K562 (cell line): ENCODE measurements at regions of chr1 and their contacts with region 1.

Region 1: DNA sequence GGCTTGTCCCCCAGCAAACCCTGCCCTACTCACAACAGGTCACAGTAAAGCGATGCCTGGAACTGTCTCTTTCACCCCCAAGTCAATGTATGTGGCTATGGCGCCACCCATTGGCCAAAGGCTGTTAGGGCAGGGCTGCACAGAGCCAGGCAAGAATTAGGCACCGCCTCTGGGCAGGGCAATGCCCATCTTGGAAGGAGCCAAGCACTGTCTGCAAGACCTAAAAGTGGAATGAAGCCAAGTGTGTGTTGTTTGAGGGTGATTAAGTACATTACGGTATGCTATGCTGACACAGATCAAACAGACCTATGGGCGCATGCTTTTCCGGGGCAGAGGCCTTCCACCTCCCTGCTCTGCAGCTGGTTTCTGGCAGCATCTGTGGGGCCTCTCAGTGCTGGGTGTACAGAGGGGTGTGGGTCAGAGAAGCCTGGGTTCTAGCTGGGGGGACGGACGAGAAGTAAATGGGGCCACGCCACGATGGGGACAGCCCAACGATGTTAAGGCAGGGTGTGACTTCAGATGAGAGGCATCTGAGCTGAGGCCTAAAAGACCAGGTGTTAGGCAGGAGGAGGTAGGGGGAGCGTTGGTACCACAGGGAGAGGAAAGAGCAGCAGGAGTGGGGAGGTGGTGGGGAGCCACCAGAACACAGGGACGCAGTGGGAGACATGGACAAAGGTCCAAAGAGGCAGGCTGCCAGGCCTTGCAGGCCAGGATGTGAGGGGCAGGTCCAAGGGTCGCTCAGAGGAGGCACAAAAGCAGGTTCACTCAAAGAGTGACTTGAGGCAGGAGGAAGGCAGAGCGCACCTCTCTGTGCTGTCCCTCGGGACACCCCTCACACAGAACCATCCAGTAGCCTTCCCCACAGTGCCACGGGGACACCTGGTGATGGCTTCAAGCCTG is 49.8 kb downstream of the ACOT7 start:
- DNase-seq: peak; percentile 77 to 83 (median 80)
- ATAC-seq: peak; percentile 94
- H3K4me3 ChIP-seq: no peak overlapping the region
- H3K27ac ChIP-seq: no peak overlapping the region
- H3K4me1 ChIP-seq: no peaks in the 10 kb centered on the region
- H3K27me3 ChIP-seq: no peaks in the 10 kb centered on the region
- CTCF ChIP-seq: peak; percentile 95 to 99 (median 98)
- EP300 ChIP-seq: no peak
- POLR2A ChIP-seq: no peak
- RAD21 ChIP-seq: peak; percentile 98

Region 2: GRCh38 chr1:6041432-6042062 is 302.2 kb before region 1 on chr1:
- CTCF ChIA-PET with region 1: no interaction called
- POLR2A ChIA-PET with region 1: no interaction called
- in situ Hi-C with region 1: loop called (anchors 5 kb)
- intact Hi-C with region 1: no loop called
- DNase-seq: peak; percentile 70 to 83 (median 81)
- ATAC-seq: peak; percentile 94
- H3K4me3 ChIP-seq: no peak overlapping the region
- H3K27ac ChIP-seq: no peak overlapping the region
- H3K4me1 ChIP-seq: peaks cover 0 to 20% of the 10 kb centered on the region in 2 experiments; a peak in 2 of 5 replicates
- H3K27me3 ChIP-seq: peaks cover 0 to 19% of the 10 kb centered on the region in 2 experiments; a peak in 4 of 5 replicates
- CTCF ChIP-seq: peak; percentile 85 to 89 (median 88)
- EP300 ChIP-seq: no peak
- POLR2A ChIP-seq: no peak
- RAD21 ChIP-seq: peak in 1 of 2 experiments; percentile 84; a peak in 3 of 4 replicates

Region 3: DNA sequence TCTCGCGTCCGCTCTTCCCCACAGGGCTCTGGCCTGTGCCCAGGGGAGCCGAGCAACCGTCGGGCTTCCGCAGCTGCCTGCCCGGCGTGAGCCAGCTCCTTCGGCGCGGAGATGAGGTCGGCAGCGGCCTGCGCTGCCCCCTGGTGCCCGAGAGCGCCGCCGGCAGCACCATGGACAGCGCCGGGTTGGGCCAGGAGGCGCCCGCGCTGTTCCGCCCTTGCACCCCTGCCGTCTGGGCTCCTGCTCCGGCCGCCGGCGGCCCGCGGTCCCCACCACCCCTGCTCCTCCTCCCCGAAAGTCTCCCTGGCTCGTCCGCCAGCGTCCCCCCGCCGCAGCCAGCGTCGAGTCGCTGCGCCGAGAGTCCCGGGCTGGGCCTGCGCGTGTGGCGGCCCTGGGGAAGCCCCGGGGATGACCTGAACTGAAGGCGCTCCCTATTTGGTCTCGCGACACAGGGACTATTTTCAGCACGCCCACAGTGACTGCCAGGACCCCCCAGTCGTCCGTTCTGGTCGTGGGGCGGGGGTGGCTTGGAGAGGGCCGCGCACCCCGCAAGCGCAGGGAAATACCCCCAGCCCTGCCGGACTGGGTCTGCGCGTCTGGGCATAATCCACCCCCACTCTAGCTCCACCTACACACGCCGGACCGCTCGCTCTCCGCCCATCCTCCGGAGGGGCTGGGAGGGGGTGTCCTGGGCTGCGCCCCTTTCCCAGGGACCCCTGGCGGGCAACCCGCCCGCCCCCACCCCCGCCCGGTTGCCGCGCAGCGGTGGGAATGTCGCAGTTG is 98.5 kb before region 1 on chr1:
- CTCF ChIA-PET with region 1: interaction called, 131 read pairs
- POLR2A ChIA-PET with region 1: no interaction called
- in situ Hi-C with region 1: loop called (anchors 5 kb)
- intact Hi-C with region 1: loop called (anchors 1 kb)
- DNase-seq: peak; percentile 90 to 92 (median 90)
- ATAC-seq: peak; percentile 89
- H3K4me3 ChIP-seq: peak overlapping the region; percentile 34
- H3K27ac ChIP-seq: no peak overlapping the region
- H3K4me1 ChIP-seq: peaks cover 5 to 64% of the 10 kb centered on the region in 2 experiments; a peak in 3 of 5 replicates
- H3K27me3 ChIP-seq: peaks cover 40 to 70% of the 10 kb centered on the region in 2 experiments
- CTCF ChIP-seq: peak; percentile 90 to 98 (median 96)
- EP300 ChIP-seq: no peak
- POLR2A ChIP-seq: no peak
- RAD21 ChIP-seq: peak; percentile 87 to 95

Region 4: DNA sequence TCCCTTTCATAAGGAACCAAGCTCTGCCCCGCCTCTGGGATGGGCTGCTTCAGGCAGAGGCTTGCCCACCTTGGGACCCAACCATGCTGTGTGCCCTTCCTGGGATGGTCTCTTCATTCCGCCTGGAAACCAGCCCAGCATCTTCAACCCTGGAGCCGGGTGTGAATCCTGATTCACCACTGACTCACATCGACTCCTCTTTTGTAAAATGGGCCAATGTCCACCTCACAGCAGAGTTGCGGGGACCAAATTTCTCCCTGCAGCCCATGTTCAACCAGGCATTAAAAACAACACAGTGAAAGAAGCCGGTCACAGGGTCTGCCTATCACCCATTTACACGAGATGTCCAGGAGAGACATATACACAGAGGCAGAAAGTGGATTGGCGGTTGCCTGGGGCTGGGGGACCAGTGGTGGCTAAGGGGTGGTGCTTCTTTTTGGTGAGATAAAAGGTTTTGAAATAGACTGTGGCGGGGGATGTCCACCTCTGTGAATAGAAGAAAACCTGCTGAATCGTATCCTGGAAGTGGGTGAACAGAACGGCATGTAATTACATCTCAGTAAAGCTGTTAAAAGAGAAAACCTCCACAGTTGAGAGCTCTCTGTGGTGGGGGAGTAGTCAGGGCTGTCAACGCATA is 76.0 kb before region 1 on chr1:
- CTCF ChIA-PET with region 1: interaction called, 20 read pairs
- POLR2A ChIA-PET with region 1: interaction called, 3 read pairs
- in situ Hi-C with region 1: no loop called
- intact Hi-C with region 1: loop called (anchors 1 kb)
- DNase-seq: no peak
- ATAC-seq: peak; percentile 37
- H3K4me3 ChIP-seq: no peak overlapping the region
- H3K27ac ChIP-seq: no peak overlapping the region
- H3K4me1 ChIP-seq: peaks cover 0 to 70% of the 10 kb centered on the region in 2 experiments; a peak in 3 of 5 replicates
- H3K27me3 ChIP-seq: no peaks in the 10 kb centered on the region
- CTCF ChIP-seq: no peak
- EP300 ChIP-seq: no peak
- POLR2A ChIP-seq: no peak
- RAD21 ChIP-seq: no peak

Region 5: GRCh38 chr1:6401673-6402072 is 57.9 kb after region 1 on chr1:
- CTCF ChIA-PET with region 1: interaction called, 74 read pairs
- POLR2A ChIA-PET with region 1: no interaction called
- in situ Hi-C with region 1: loop called (anchors 5 kb)
- intact Hi-C with region 1: loop called (anchors 1 kb)
- DNase-seq: no peak
- ATAC-seq: no peak
- H3K4me3 ChIP-seq: no peak overlapping the region
- H3K27ac ChIP-seq: no peak overlapping the region
- H3K4me1 ChIP-seq: peaks cover 0 to 12% of the 10 kb centered on the region in 2 experiments; a peak in 3 of 5 replicates
- H3K27me3 ChIP-seq: peaks cover 6% of the 10 kb centered on the region in 2 experiments
- CTCF ChIP-seq: no peak
- EP300 ChIP-seq: no peak
- POLR2A ChIP-seq: no peak
- RAD21 ChIP-seq: no peak

Region 6: DNA sequence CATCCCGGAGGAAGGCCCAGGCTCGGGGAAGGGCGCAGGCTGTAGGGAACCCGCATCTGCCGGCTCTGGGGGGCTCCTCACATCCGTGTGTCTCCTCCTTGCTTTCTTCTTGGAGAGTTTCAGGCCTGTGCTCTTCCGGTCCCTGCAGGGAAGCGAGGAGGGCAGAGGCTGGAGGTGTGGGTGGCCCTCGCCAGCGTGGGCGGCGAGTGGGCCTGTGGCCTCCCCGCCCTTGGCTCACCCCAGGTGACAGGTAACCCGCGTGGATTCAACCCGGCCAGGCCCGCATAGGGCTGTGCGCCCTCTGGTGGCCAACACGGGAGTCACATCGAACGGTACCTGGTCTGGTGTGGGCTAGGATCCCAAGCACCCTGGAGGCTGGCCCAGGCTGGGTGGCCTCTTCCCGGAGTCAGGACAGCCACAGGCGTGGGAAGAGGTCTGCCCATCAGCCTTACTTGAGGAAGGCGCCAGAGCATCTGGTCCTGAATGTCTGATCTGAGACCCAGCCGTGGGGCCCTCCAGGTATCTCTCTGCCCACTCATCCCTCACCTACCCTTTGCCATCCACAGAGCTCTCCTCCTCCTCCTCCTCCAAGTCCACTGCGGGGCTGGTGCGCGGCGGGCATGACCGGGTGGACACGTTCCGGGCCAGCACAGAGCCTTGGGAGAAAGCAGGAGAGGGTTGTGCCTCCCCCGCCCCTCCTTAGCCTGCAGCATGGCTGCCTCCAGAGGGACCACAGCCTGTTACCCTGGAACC is 131.8 kb after region 1 on chr1:
- CTCF ChIA-PET with region 1: interaction called, 6 read pairs
- POLR2A ChIA-PET with region 1: no interaction called
- in situ Hi-C with region 1: no loop called
- intact Hi-C with region 1: loop called (anchors 1 kb)
- DNase-seq: peak; percentile 82 to 96 (median 94)
- ATAC-seq: peak; percentile 80
- H3K4me3 ChIP-seq: no peak overlapping the region
- H3K27ac ChIP-seq: no peak overlapping the region
- H3K4me1 ChIP-seq: peaks cover 10 to 51% of the 10 kb centered on the region in 2 experiments; a peak in 4 of 5 replicates
- H3K27me3 ChIP-seq: peaks cover 34 to 75% of the 10 kb centered on the region in 2 experiments
- CTCF ChIP-seq: peak; percentile 87 to 99 (median 95)
- EP300 ChIP-seq: no peak
- POLR2A ChIP-seq: no peak
- RAD21 ChIP-seq: peak in 1 of 2 experiments; percentile 69; a peak in 2 of 4 replicates

Region 7: DNA sequence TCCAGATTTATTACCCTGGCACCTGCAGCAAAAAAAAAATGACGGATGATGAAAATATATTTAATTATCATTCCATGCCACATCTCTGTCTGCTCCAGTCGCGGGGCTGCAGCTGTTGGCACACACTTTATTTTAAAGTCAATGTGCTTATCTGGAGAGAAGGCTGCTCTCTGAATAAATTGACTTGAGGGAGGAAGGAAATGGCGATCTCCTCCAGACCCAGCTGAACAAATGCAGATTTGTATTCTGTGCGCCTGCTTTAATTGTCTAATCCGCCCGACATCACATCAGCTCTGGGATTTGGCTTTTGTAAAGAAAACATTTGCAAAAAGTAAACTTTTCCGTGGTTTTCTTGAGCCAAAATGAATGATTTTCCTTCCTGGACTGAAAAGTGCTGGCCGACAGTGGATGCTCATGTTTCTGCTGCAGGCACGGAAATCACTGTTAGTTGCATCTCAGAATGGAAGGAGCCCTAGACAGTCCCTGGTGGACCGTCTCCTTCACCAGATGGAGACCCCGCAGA is 591.7 kb after region 1 on chr1:
- CTCF ChIA-PET with region 1: no interaction called
- POLR2A ChIA-PET with region 1: no interaction called
- in situ Hi-C with region 1: no loop called
- intact Hi-C with region 1: no loop called
- DNase-seq: no peak
- ATAC-seq: no peak
- H3K4me3 ChIP-seq: no peak overlapping the region
- H3K27ac ChIP-seq: no peak overlapping the region
- H3K4me1 ChIP-seq: no peaks in the 10 kb centered on the region
- H3K27me3 ChIP-seq: peaks cover 29 to 41% of the 10 kb centered on the region in 2 experiments
- CTCF ChIP-seq: no peak
- EP300 ChIP-seq: no peak
- POLR2A ChIP-seq: no peak
- RAD21 ChIP-seq: no peak